ENCODE measurements at regions of chr11 and their contacts with region 1.

Region 1: DNA sequence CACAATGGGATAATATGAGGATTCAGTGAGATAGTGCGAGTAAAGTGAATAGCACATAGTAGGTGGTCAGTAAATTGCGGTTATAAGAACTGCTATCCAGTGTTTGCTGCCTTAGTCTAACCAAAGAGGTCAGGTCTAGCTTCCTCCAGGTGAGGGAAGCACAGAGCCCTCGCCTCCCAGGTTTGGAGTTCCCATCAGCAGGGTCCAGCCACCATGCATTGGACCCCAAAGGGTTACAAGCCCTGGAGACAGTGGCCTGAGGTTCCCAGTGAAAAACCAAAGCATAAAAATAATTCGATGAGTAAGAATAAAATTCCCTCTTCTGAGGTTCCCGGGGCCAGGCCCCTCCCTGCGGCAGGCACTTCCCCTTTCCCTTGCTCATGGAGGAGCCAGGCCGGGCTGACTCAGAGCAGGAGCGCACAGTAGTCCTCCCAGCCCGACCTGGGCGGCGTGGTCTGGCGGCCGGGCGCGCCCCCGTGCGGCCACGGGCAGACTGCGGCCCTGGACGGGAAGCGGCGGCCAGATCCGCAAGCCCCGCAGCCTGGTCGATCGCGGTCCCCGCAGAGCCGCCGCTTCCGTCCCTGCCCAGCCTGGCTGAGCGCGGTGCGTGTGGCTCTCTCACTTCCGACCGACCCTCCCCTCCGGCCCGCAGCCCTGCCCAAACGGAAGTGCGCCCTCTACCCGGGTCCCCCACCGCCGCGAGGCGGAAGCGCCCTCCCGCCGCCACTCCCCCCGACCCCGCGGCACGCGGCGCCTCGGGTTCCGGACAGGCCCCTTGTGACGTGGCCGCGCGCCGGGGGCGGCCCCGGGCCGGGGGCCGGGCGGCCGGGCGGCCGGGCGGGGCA is at the start of gene SLC39A13:
- DNase-seq: peak; percentile 94 to 97
- ATAC-seq: peak; percentile 89 to 93 (median 91)
- H3K4me3 ChIP-seq: peak within 1 kb of the TSS; percentile 86
- H3K27ac ChIP-seq: peak within 1 kb of the TSS; percentile 86
- H3K4me1 ChIP-seq: peaks cover 23% of the 10 kb centered on the region
- H3K27me3 ChIP-seq: no peaks in the 10 kb centered on the region
- CTCF ChIP-seq: peak; percentile 78
- total RNA-seq, gene SLC39A13: 14.7 to 26.9 (median 19.9) TPM

Region 2: DNA sequence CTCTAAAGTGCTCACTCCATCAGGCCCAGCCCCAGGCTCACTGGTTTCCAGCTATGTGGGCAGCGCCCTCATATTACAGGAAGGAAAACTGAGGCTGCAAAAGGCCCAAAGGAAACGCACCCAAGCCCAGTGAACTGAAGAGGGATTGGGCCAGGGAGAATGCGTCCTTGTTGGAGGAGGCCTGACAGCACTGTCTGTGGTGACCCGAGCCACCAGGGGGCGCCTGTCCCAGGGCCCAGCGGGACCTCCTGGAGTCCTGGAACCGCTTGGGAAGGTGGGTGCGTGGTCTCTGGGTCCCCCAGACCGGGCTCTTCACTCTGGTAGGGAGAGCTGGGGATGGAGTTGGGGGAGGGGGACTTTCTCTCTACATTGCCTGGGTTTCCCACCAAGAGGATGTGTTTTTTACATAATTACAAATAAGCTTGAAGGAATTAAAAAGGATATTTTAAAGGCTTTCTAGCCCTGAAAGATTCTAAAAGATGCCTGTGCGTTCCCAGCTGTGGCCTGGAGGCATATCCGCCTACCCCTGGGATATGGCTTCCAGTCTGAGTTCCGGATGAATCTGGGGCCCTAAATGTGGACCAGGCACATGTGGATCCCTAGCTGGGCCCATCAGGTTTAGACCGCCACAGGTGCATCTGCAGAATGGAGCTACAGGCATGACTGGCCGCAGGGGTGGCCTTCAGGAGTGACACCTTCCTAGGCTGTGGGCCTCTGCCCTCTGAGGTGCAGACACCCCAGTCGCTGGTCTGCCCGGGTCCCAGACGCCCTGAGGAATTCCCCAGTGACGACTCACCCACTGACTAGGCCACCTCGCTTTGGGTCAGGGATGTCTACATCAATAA is 33.9 kb before region 1 on chr11:
- intact Hi-C with region 1: loop called (anchors 1 to 5 kb)
- DNase-seq: peak; percentile 87 to 92
- ATAC-seq: peak; percentile 89 to 96 (median 92)
- H3K4me3 ChIP-seq: peak overlapping the region; percentile 11
- H3K27ac ChIP-seq: no peak overlapping the region
- H3K4me1 ChIP-seq: no peaks in the 10 kb centered on the region
- H3K27me3 ChIP-seq: no peaks in the 10 kb centered on the region
- CTCF ChIP-seq: peak; percentile 92

Region 3: GRCh38 chr11:47426061-47426956 is 18.3 kb after region 1 on chr11 and contains the start of gene PSMC3:
- intact Hi-C with region 1: loop called in 1 of 2 experiments (anchors 1 kb)
- DNase-seq: peak; percentile 99 to 100
- ATAC-seq: peak; percentile 95 to 98 (median 96)
- H3K4me3 ChIP-seq: peak within 1 kb of the TSS; percentile 83
- H3K27ac ChIP-seq: peak within 1 kb of the TSS; percentile 90
- H3K4me1 ChIP-seq: peaks cover 21% of the 10 kb centered on the region
- H3K27me3 ChIP-seq: no peaks in the 10 kb centered on the region
- CTCF ChIP-seq: no peak
- total RNA-seq, gene PSMC3: 141 to 255 (median 191) TPM